HepG2 (cell line): ENCODE measurements at regions of chr3 and their contacts with region 1.

Region 1: DNA sequence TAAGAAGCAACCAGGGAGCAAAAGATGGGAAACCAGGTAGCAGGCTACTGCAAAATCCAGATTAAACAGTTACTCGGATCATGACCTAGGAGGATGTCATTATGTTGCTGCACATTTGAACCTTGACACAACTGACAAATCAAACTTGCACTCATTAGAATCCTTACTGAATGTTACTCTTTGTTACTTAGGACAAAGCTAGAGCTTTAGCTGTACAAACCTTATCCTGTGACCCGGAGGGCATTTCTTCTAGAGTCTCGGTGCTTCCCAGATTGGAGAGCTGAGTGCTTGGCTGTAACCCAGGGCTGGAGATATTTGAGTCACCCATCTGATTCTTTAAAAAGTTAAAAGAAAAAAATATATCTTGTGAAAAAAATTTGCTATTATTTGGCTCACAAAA is 43.4 kb downstream of the DCP1A start:
- DNase-seq: no peak
- ATAC-seq: no peak
- H3K4me3 ChIP-seq: no peak overlapping the region
- H3K27ac ChIP-seq: no peak overlapping the region
- H3K4me1 ChIP-seq: no peaks in the 10 kb centered on the region
- H3K27me3 ChIP-seq: no peaks in the 10 kb centered on the region
- CTCF ChIP-seq: no peak
- EP300 ChIP-seq: no peak
- POLR2A ChIP-seq: no peak
- RAD21 ChIP-seq: no peak

Region 2: GRCh38 chr3:53219895-53220483 is 84.0 kb before region 1 on chr3:
- CTCF ChIA-PET with region 1: no interaction called
- POLR2A ChIA-PET with region 1: no interaction called
- in situ Hi-C with region 1: no loop called
- intact Hi-C with region 1: no loop called
- DNase-seq: peak; percentile 76
- ATAC-seq: peak; percentile 78
- H3K4me3 ChIP-seq: no peak overlapping the region
- H3K27ac ChIP-seq: no peak overlapping the region
- H3K4me1 ChIP-seq: peaks cover 37% of the 10 kb centered on the region
- H3K27me3 ChIP-seq: no peaks in the 10 kb centered on the region
- CTCF ChIP-seq: peak; percentile 97
- EP300 ChIP-seq: no peak
- POLR2A ChIP-seq: no peak
- RAD21 ChIP-seq: peak; percentile 87

Region 3: GRCh38 chr3:53293867-53294266 is 10.1 kb before region 1 on chr3:
- CTCF ChIA-PET with region 1: no interaction called
- POLR2A ChIA-PET with region 1: no interaction called
- in situ Hi-C with region 1: no loop called
- intact Hi-C with region 1: no loop called
- DNase-seq: no peak
- ATAC-seq: no peak
- H3K4me3 ChIP-seq: no peak overlapping the region
- H3K27ac ChIP-seq: no peak overlapping the region
- H3K4me1 ChIP-seq: peaks cover 19% of the 10 kb centered on the region
- H3K27me3 ChIP-seq: no peaks in the 10 kb centered on the region
- CTCF ChIP-seq: no peak
- EP300 ChIP-seq: no peak
- POLR2A ChIP-seq: no peak
- RAD21 ChIP-seq: no peak

Region 4: GRCh38 chr3:53347261-53348064 is 43.5 kb after region 1 on chr3 and contains the start of gene DCP1A:
- CTCF ChIA-PET with region 1: no interaction called
- POLR2A ChIA-PET with region 1: interaction called, 4 read pairs
- in situ Hi-C with region 1: no loop called
- intact Hi-C with region 1: loop called (anchors 2 kb)
- DNase-seq: peak; percentile 93
- ATAC-seq: peak; percentile 96
- H3K4me3 ChIP-seq: peak within 1 kb of the TSS; percentile 76 to 99 (median 97)
- H3K27ac ChIP-seq: peak within 1 kb of the TSS; percentile 98
- H3K4me1 ChIP-seq: peaks cover 40% of the 10 kb centered on the region
- H3K27me3 ChIP-seq: no peaks in the 10 kb centered on the region; a peak in 1 of 5 replicates
- CTCF ChIP-seq: peak; percentile 45
- EP300 ChIP-seq: peak; percentile 68 to 81; a peak in 2 of 4 replicates
- POLR2A ChIP-seq: peak; percentile 94 to 97
- RAD21 ChIP-seq: peak; percentile 75
- total RNA-seq, gene DCP1A: 14.2 and 20.7 TPM in 2 replicates

Region 5: GRCh38 chr3:53375019-53375418 is 71.1 kb after region 1 on chr3:
- CTCF ChIA-PET with region 1: no interaction called
- POLR2A ChIA-PET with region 1: no interaction called
- in situ Hi-C with region 1: no loop called
- intact Hi-C with region 1: loop called (anchors 1 kb)
- DNase-seq: peak; percentile 69
- ATAC-seq: peak; percentile 99
- H3K4me3 ChIP-seq: no peak overlapping the region
- H3K27ac ChIP-seq: no peak overlapping the region
- H3K4me1 ChIP-seq: no peaks in the 10 kb centered on the region
- H3K27me3 ChIP-seq: no peaks in the 10 kb centered on the region
- CTCF ChIP-seq: peak; percentile 94
- EP300 ChIP-seq: no peak
- POLR2A ChIP-seq: no peak
- RAD21 ChIP-seq: peak; percentile 93